Naive thymus-derived CD4-positive, alpha-beta T cell (primary cell): ENCODE measurements at regions of chr3 and their contacts with region 1.

Region 1: DNA sequence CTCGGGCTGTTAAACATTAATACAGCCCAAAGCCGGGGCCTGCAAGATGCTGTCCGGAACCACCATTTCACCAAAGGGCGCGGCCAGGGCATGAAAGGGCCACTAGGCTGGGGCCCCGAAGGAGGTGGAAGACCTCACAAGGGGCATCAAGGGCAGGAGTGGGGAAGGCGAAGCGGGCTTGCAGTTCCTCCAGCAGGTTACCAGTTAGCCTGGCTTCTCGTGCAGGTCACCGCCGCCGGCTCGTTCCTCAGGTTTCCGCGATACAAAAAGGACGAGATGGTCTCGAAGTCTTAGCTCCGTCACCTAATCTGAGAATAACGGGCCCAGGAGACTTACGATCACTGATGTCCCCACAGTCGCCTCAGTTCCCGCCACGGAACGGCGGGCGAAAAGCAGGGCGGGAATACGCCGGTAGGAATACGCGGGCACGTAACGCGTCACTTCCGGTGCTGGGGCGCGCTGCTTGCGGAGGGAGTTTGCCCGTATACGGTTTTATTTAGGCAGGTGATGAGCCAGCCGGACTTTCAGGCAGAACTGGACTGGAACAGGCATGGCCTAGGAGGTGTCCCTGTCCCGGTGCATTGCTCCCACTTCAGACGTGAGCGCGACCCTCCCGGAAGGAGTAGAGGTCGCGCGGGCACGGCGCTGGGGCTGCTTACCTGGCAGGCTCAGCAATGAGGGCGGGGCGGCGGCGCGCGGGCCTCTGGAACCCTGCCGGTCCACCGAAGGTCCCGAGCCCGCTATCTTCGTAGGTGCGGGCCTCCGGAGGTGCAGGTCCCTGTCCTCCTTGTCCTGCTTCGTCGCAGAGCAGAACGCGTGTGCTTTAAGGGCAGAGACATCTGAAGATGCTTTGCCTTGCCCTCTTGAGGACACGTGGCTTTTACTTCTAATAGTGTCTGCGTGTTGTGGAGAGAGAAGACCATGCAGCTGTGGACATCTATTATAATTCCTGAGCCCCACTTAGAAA is at the start of gene RFC4:
- DNase-seq: peak; percentile 66 to 86 (median 82)
- ATAC-seq: peak; percentile 91
- H3K4me3 ChIP-seq: peak within 1 kb of the TSS; percentile 95
- H3K4me3 Mint-ChIP-seq: peak within 1 kb of the TSS; percentile 89 to 97 (median 94)
- H3K27ac ChIP-seq: peak within 1 kb of the TSS; percentile 86
- H3K27ac Mint-ChIP-seq: peak within 1 kb of the TSS; percentile 84 to 97 (median 95)
- H3K4me1 ChIP-seq: peaks cover 17 to 21% of the 10 kb centered on the region in 2 donors
- H3K4me1 Mint-ChIP-seq: peaks cover 5 to 38% (median 18%) of the 10 kb centered on the region in 7 donors
- H3K27me3 ChIP-seq: no peaks in the 10 kb centered on the region
- H3K27me3 Mint-ChIP-seq: no peaks in the 10 kb centered on the region
- total RNA-seq, gene RFC4: 8.7 to 71.6 (median 22.1) TPM

Region 2: GRCh38 chr3:186772701-186773424 is 33.5 kb before region 1 on chr3:
- CTCF ChIA-PET with region 1: no interaction called
- POLR2A ChIA-PET with region 1: interaction called, 6 read pairs
- intact Hi-C with region 1: loop called (anchors 1 to 5 kb)
- DNase-seq: peak; percentile 31 to 65 (median 40)
- ATAC-seq: peak; percentile 92
- H3K4me3 ChIP-seq: peak overlapping the region; percentile 58
- H3K4me3 Mint-ChIP-seq: peak overlapping the region; percentile 82 to 99 (median 94)
- H3K27ac ChIP-seq: peak overlapping the region; percentile 74
- H3K27ac Mint-ChIP-seq: peak overlapping the region; percentile 80 to 97 (median 91)
- H3K4me1 ChIP-seq: peaks cover 0 to 4% of the 10 kb centered on the region in 2 donors
- H3K4me1 Mint-ChIP-seq: peaks cover 3 to 19% (median 16%) of the 10 kb centered on the region in 7 donors
- H3K27me3 ChIP-seq: no peaks in the 10 kb centered on the region
- H3K27me3 Mint-ChIP-seq: peaks cover 0 to 6% (median 0%) of the 10 kb centered on the region in 5 donors

Region 3: DNA sequence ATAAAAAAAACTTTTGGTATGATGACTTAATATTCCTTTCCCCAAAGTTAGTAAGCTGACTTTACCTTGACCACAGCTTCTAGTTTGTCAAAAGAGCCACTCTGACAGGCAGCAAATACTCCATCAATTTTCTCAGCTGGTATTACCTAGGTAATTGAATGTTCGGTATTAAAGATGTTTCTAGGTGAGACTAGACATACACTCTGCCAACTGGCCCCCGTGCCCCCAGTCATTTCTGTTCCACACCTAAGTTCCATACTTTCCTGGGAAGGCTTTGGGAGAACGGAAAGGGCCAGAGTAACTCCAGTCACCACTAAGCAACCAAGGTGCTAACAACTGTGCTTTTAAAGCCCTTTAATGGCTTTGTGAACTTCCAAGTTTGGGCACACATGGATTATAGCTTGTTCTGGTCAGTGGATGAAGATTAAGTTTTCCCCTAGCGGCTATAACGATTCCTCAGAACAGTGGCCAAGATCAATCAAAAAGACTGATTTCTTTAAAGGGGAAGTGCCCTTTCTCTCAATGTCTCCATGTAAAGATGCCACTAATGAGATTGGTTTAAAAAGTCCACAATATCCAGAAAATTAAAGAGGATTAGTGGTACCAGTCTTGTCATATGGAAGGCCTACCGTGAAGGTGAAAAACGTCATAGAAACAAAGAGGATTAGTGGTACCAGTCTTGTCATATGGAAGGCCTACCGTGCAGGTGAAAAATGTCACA is 16.0 kb before region 1 on chr3:
- CTCF ChIA-PET with region 1: interaction called, 5 read pairs
- POLR2A ChIA-PET with region 1: interaction called, 121 read pairs
- intact Hi-C with region 1: loop called in 1 of 2 experiments (anchors 2 kb)
- DNase-seq: no peak
- ATAC-seq: peak; percentile 40
- H3K4me3 ChIP-seq: no peak overlapping the region
- H3K4me3 Mint-ChIP-seq: no peak overlapping the region
- H3K27ac ChIP-seq: no peak overlapping the region
- H3K27ac Mint-ChIP-seq: peak overlapping the region in 7 of 9 donors; percentile 1 to 57 (median 38)
- H3K4me1 ChIP-seq: peaks cover 28 to 38% of the 10 kb centered on the region in 2 donors
- H3K4me1 Mint-ChIP-seq: peaks cover 18 to 49% (median 39%) of the 10 kb centered on the region in 7 donors
- H3K27me3 ChIP-seq: no peaks in the 10 kb centered on the region
- H3K27me3 Mint-ChIP-seq: no peaks in the 10 kb centered on the region

Region 4: GRCh38 chr3:186826976-186827731 is 20.8 kb after region 1 on chr3:
- CTCF ChIA-PET with region 1: interaction called, 3 read pairs
- POLR2A ChIA-PET with region 1: interaction called, 10 read pairs
- intact Hi-C with region 1: loop called (anchors 1 kb)
- DNase-seq: peak; percentile 79 to 92 (median 87)
- ATAC-seq: peak; percentile 96
- H3K4me3 ChIP-seq: peak overlapping the region; percentile 66
- H3K4me3 Mint-ChIP-seq: peak overlapping the region; percentile 53 to 91 (median 80)
- H3K27ac ChIP-seq: peak overlapping the region; percentile 52
- H3K27ac Mint-ChIP-seq: peak overlapping the region in 2 of 9 donors; percentile 18 to 19
- H3K4me1 ChIP-seq: peaks cover 6 to 21% of the 10 kb centered on the region in 2 donors
- H3K4me1 Mint-ChIP-seq: peaks cover 15 to 24% (median 20%) of the 10 kb centered on the region in 7 donors
- H3K27me3 ChIP-seq: peaks cover 0 to 22% of the 10 kb centered on the region in 2 donors
- H3K27me3 Mint-ChIP-seq: peaks cover 45 to 61% (median 52%) of the 10 kb centered on the region in 5 donors

Region 5: DNA sequence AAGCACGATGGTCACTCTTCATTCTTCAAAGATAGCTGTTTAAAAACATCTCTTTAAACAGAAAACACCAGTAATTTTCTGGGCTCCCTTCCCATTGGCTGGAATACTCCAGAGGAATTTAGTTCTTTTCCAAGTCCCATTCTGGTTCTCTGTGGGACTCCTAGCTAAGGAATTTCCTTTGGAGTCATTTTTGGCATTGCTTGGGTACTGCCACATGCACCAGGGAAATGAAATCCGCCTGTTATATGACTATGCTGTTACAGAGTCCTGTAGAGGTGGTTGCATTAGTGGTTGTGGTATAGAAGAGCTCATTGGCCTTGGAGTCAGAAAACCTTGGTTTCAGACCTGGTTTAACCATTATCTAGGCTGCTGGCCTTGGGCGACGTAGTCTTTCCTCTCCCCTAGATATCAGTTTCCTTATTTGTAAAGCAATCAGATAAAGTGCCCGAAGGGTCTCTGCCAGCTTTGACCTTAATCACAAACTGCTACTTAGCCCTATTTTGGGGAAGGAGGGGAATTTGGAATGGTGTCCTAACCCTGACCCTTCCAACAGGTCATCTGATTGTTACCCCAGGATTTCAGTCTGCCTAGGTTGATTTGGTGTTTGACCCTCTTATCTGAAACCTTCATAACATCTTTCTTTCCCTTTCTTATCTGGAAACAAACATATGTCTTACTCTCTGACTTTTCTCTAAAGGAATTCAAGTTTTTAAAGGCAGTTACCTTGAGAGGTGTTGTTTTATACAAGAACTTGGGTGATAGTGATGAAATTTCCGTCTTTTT is 404.4 kb after region 1 on chr3:
- CTCF ChIA-PET with region 1: no interaction called
- POLR2A ChIA-PET with region 1: no interaction called
- intact Hi-C with region 1: no loop called
- DNase-seq: no peak
- ATAC-seq: no peak
- H3K4me3 ChIP-seq: no peak overlapping the region
- H3K4me3 Mint-ChIP-seq: no peak overlapping the region
- H3K27ac ChIP-seq: no peak overlapping the region
- H3K27ac Mint-ChIP-seq: no peak overlapping the region
- H3K4me1 ChIP-seq: no peaks in the 10 kb centered on the region
- H3K4me1 Mint-ChIP-seq: no peaks in the 10 kb centered on the region
- H3K27me3 ChIP-seq: no peaks in the 10 kb centered on the region
- H3K27me3 Mint-ChIP-seq: peaks cover 0 to 24% (median 3%) of the 10 kb centered on the region in 5 donors